ENCODE measurements at regions of chr12 and their contacts with region 1.

Region 1: GRCh38 chr12:47576289-47576945 is 129.4 kb downstream of the RPAP3 start:
- DNase-seq: no peak
- H3K4me3 Mint-ChIP-seq: no peak overlapping the region
- H3K27ac Mint-ChIP-seq: no peak overlapping the region
- H3K4me1 Mint-ChIP-seq: peaks cover 25% of the 10 kb centered on the region
- H3K27me3 Mint-ChIP-seq: no peaks in the 10 kb centered on the region

Region 2: DNA sequence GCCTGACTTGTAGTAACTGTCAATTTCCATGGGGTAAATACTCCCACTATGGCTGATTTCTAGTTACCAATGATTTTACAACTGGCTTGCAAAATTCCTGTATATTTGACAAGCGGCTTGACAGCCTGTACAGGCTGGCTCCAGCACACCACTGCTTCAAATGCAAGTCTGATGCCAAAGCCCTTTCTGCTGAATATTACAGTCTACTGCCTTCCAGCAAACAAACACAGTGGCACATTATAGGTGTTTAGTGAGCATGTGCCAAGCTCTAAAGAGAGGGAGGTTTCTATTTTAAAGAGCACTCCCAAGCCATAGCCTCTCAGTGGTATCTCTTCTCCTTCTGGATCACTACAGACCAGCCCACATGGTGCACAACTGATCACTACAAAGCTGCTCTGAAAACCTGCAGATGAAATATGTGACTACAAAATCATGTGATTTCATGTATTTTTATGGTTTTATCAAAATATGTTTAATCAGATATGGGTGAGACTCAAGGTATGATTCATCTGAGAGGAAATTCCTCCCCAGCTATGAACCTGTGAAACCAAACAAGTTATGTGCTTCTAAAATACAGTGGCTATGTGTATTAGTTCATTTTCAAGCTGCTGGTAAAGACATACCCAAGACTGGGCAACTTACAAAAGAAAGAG is 27.9 kb after region 1 on chr12:
- intact Hi-C with region 1: loop called (anchors 1 kb)
- DNase-seq: no peak
- H3K4me3 Mint-ChIP-seq: no peak overlapping the region
- H3K27ac Mint-ChIP-seq: no peak overlapping the region
- H3K4me1 Mint-ChIP-seq: peaks cover 12% of the 10 kb centered on the region
- H3K27me3 Mint-ChIP-seq: no peaks in the 10 kb centered on the region